ENCODE measurements at regions of chr9 and their contacts with region 1.

Region 1: GRCh38 chr9:126558051-126558665 is 55.6 kb upstream of the LMX1B start:
- H3K4me3 ChIP-seq: no peak overlapping the region
- H3K27ac ChIP-seq: no peak overlapping the region
- H3K4me1 ChIP-seq: no peaks in the 10 kb centered on the region
- CTCF ChIP-seq: peak; percentile 48

Region 2: DNA sequence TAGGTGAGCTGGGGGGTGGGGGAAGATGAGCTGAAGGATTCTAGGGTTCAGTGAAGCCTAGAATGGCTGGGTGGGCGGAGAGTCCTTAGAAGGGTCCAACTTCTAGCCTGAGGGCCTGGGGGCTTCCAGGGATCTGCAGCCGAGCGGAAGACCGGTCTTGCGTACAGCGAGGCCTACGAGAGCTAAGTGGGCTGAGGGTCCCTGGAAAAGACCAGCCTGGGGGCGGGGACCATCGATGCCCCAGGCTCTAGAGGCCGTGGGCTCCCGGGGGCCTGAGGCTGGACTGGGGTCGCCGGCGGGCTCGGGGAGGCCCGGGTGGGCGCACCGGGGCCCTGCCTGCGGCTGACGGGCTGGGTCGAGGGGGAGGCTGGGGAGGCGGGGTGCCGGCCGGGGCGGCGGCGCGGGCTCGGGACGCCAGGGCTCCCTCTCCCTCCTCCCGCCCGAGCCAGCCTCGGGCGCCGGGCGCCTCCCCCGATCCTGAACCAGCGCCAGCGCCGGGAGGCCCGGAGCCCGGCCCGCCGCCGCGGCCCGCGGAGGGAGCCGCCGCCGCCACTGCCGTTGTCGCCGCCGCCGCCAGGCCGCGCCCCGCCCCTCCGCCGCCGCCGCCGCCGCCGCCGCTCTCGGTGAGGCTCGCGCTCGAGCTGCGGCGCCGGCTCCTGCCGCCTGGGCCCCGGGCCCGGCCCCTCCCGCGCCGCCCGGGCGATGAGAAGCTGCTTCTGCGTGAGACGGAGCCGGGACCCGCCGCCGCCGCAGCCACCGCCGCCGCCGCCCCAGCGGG is 231.7 kb before region 1 on chr9 and contains the start of gene MVB12B:
- CTCF ChIA-PET with region 1: no interaction called
- POLR2A ChIA-PET with region 1: no interaction called
- H3K4me3 ChIP-seq: peak within 1 kb of the TSS; percentile 60
- H3K27ac ChIP-seq: peak within 1 kb of the TSS; percentile 83
- H3K4me1 ChIP-seq: peaks cover 3% of the 10 kb centered on the region; the same call in 1 of the 2 replicates
- CTCF ChIP-seq: no peak

Region 3: DNA sequence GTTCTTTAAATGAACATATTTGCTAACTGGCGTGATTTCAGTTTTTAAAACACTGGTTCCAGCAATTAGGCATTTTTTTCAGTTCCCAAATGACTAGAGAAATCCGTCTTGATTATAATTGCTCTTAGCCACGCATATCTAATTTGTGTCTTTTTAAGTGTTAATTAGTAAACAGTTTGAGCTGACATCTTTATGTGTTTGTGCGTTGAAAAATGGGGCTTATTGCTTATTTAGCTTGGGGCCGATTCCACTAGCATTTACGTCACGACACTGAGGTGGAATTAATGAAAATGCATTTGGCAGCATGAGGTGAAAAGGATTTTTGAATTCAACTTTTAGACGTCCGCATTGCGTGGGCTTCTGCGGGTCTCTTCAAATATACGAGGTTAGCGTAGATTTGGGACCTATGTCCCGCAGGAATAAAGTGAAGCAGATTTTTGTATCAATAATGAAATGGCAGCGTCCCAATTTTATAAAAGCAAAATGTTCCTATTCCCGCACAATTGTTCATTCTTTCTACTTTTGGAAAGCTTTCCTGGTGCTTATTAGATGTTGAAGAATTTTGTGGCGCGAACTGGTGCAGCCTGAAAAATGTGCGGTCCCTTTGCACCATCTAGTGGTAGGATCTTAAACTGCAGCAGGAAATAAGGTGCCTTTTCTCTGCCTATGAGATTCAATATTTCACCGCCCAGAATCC is 67.1 kb before region 1 on chr9:
- CTCF ChIA-PET with region 1: interaction called, 13 read pairs
- POLR2A ChIA-PET with region 1: no interaction called
- H3K4me3 ChIP-seq: no peak overlapping the region
- H3K27ac ChIP-seq: no peak overlapping the region
- H3K4me1 ChIP-seq: no peaks in the 10 kb centered on the region
- CTCF ChIP-seq: no peak

Region 4: GRCh38 chr9:126506361-126506941 is 51.7 kb before region 1 on chr9:
- CTCF ChIA-PET with region 1: interaction called, 184 read pairs
- POLR2A ChIA-PET with region 1: no interaction called
- H3K4me3 ChIP-seq: no peak overlapping the region
- H3K27ac ChIP-seq: no peak overlapping the region
- H3K4me1 ChIP-seq: no peaks in the 10 kb centered on the region
- CTCF ChIP-seq: no peak

Region 5: DNA sequence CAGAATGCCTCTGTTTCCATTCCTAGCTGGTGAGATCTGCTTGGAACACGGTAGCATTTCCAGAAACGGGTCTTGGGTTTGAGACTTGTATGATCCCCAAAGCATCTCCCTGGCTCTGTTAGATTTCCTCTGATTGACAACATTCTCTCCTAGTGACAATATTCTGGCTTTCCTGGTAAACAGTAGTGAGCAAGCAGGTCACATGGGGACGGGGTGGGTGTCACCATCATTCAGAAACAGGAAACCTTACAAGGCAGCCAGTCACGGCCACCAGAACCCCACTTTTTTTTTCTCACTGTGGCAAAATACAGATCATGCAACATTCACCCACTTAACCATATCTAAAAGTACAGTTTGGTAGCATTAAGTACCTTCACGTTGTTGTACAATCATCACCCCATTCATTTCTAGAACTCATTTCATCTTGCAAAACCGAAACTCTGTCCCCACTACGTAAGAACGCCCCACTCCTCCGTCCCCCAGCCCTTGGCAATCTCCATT is 34.5 kb before region 1 on chr9:
- CTCF ChIA-PET with region 1: interaction called, 18 read pairs
- POLR2A ChIA-PET with region 1: no interaction called
- H3K4me3 ChIP-seq: no peak overlapping the region
- H3K27ac ChIP-seq: no peak overlapping the region
- H3K4me1 ChIP-seq: no peaks in the 10 kb centered on the region
- CTCF ChIP-seq: no peak

Region 6: DNA sequence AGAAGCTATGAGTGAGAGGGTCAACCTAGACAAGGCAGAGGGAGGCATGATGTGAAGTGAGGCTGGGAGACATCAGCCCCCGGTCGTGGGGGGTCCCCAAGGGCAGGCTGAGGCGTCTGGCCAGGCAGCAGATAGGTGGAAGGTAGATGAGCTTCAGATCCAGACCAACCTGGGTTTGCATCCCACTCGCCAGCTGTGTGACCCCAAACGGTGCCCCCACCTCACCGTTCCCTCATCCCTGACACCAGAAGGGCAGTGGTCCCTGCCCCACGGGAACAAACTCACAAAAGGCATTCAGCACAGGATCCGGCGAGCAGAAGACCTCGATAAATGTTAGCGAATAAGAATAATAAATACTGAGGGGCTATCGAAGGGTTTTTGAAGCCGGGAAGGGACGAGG is 28.1 kb after region 1 on chr9:
- CTCF ChIA-PET with region 1: interaction called, 10 read pairs
- POLR2A ChIA-PET with region 1: no interaction called
- H3K4me3 ChIP-seq: no peak overlapping the region
- H3K27ac ChIP-seq: no peak overlapping the region
- H3K4me1 ChIP-seq: peaks cover 13% of the 10 kb centered on the region
- CTCF ChIP-seq: no peak

Region 7: DNA sequence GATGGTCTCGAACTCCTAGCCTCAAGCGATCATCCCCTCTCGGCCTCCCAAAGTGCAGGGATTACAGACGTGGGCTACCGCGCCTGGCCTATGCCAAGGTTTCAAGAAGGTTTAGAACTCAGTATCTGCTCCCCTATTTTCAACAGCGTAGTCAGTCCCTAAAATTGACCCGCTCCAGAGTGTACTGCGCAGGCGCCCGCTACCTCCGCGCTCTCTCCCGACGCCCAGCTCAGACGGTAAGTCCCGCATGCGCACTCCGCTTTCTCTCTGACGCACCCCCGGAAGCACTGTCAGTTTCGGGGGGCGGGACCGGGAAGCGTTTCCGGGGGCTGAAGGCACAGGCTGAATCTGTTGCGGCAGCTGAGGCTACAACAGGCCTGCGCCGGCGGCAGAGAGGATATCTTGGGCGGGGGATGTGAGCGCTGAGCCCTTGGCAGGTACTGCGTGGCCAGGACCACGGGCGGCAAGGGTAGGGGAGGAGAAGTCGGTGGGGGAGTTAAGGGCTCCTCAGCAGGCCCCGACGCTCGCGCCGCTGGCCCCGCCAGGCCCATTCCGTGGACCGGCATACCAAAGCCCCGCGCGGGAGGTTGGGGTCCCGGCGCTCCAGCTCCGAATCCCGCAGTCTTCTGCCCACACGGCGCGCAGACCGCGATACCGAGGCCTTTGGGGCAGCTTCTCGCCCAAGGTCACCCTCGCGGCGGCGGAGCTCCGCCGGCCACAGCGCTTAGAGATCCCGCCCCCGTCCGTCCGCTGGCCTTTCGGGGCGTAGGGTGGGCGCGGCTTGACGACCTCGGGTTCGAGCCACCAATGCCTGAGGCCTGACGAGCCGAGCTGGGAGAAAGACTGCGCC is 246.8 kb after region 1 on chr9 and contains the start of gene ZBTB43:
- CTCF ChIA-PET with region 1: no interaction called
- POLR2A ChIA-PET with region 1: no interaction called
- H3K4me3 ChIP-seq: peak within 1 kb of the TSS; percentile 95
- H3K27ac ChIP-seq: peak within 1 kb of the TSS; percentile 79
- H3K4me1 ChIP-seq: peaks cover 7% of the 10 kb centered on the region; the same call in 1 of the 2 replicates
- CTCF ChIP-seq: no peak

Measured in HEK293 (cell line).